ENCODE measurements at regions of chr5 and their contacts with region 1.

Region 1: DNA sequence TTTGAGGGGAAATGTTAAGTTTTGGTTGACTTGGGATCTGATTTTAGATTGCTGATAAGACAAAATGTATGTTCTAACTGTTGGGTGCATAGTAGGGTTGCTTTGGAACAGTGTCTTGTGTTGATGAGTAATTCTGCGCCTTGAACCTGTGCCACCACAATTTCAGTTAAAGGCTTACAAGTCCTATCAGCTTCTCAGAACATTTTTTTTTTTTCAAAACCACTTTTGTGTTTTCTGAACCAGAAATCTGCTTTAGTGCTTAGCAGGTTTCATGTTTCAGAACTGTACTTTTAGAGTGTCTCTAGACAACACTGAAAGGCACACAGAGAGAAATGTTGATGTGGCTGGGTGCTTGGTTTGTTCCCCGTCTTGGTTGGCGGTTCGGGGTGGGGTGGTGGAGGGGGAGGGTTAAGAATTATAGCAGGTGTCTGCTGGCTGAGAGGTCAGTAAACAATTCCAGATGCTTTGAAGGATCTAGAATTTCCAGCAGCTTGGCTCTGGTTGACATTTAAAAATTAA is 84.6 kb downstream of the ANKRD55 start:
- DNase-seq: no peak
- H3K4me3 ChIP-seq: no peak overlapping the region
- H3K4me3 Mint-ChIP-seq: no peak overlapping the region
- H3K27ac Mint-ChIP-seq: peak overlapping the region; percentile 32
- H3K4me1 ChIP-seq: peaks cover 55% of the 10 kb centered on the region
- H3K4me1 Mint-ChIP-seq: peaks cover 38% of the 10 kb centered on the region
- H3K27me3 ChIP-seq: no peaks in the 10 kb centered on the region
- H3K27me3 Mint-ChIP-seq: no peaks in the 10 kb centered on the region
- CTCF ChIP-seq: no peak

Region 2: GRCh38 chr5:56070851-56071465 is 77.6 kb before region 1 on chr5:
- CTCF ChIA-PET with region 1: interaction called, 3 read pairs
- POLR2A ChIA-PET with region 1: no interaction called
- intact Hi-C with region 1: loop called (anchors 5 kb)
- DNase-seq: no peak
- H3K4me3 ChIP-seq: no peak overlapping the region
- H3K4me3 Mint-ChIP-seq: no peak overlapping the region
- H3K27ac Mint-ChIP-seq: peak overlapping the region; percentile 30
- H3K4me1 ChIP-seq: peaks cover 56% of the 10 kb centered on the region
- H3K4me1 Mint-ChIP-seq: peaks cover 34% of the 10 kb centered on the region
- H3K27me3 ChIP-seq: no peaks in the 10 kb centered on the region
- H3K27me3 Mint-ChIP-seq: no peaks in the 10 kb centered on the region
- CTCF ChIP-seq: no peak

Region 3: DNA sequence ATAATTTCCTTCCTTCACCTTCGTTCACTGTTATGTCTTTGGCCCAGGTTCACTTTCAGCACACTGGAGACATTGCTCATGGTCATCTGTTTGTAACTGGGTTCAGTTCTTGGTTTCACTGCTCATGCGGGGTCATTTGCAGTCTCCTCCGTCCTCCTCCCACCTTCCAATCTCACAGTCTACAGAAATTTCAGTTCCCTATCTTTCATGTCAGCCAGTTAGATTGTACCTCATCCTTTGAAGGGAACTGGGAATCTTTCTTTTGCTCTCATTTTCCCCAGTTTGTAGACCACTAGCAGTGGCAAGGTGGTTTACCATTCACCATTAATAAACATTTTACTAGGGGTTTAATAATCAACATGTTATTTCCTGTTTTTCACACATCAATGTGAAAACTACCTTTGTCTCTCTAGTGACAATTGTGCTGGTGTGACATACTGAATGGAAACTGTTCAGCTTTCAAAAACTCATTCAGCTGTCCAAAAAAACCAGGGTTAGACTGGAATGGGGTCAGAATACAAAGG is 52.9 kb before region 1 on chr5:
- CTCF ChIA-PET with region 1: no interaction called
- POLR2A ChIA-PET with region 1: no interaction called
- intact Hi-C with region 1: no loop called
- DNase-seq: no peak
- H3K4me3 ChIP-seq: no peak overlapping the region
- H3K4me3 Mint-ChIP-seq: no peak overlapping the region
- H3K27ac Mint-ChIP-seq: no peak overlapping the region
- H3K4me1 ChIP-seq: peaks cover 15% of the 10 kb centered on the region
- H3K4me1 Mint-ChIP-seq: peaks cover 28% of the 10 kb centered on the region
- H3K27me3 ChIP-seq: no peaks in the 10 kb centered on the region
- H3K27me3 Mint-ChIP-seq: no peaks in the 10 kb centered on the region
- CTCF ChIP-seq: no peak

Measured in Caco-2 (cell line).